Activated B cell treated with CpG ODN at 0.5 μM for 24 hours (primary cell): ENCODE measurements at regions of chr17 and their contacts with region 1.

Region 1: GRCh38 chr17:4939796-4940624 is at the starts of genes RNF167 and SLC25A11:
- DNase-seq: peak; percentile 93
- ATAC-seq: peak; percentile 84
- H3K4me3 Mint-ChIP-seq: peak within 1 kb of the TSS; percentile 97
- H3K27ac Mint-ChIP-seq: peak within 1 kb of the TSS; percentile 98
- H3K4me1 Mint-ChIP-seq: peaks cover 69% of the 10 kb centered on the region
- H3K27me3 Mint-ChIP-seq: no peaks in the 10 kb centered on the region
- CTCF ChIP-seq: no peak
- total RNA-seq, gene RNF167: 93.3 and 108 TPM in 2 replicates
- total RNA-seq, gene SLC25A11: 35.3 and 35.8 TPM in 2 replicates

Region 2: GRCh38 chr17:4903051-4903818 is 36.8 kb before region 1 on chr17 and contains the start of gene CHRNE:
- CTCF ChIA-PET with region 1: interaction called, 3 read pairs
- POLR2A ChIA-PET with region 1: interaction called, 26 read pairs
- intact Hi-C with region 1: no loop called
- DNase-seq: peak; percentile 49
- ATAC-seq: peak; percentile 41
- H3K4me3 Mint-ChIP-seq: peak within 1 kb of the TSS; percentile 49
- H3K27ac Mint-ChIP-seq: peak within 1 kb of the TSS; percentile 73
- H3K4me1 Mint-ChIP-seq: peaks cover 44% of the 10 kb centered on the region
- H3K27me3 Mint-ChIP-seq: peaks cover 2% of the 10 kb centered on the region
- CTCF ChIP-seq: no peak
- total RNA-seq, gene CHRNE: 0.38 and 0.66 TPM in 2 replicates

Region 3: GRCh38 chr17:4997302-4998026 is 57.5 kb after region 1 on chr17 and contains the starts of genes INCA1 and KIF1C:
- CTCF ChIA-PET with region 1: no interaction called
- POLR2A ChIA-PET with region 1: interaction called, 22 read pairs
- intact Hi-C with region 1: loop called (anchors 1 kb)
- DNase-seq: peak; percentile 95
- ATAC-seq: peak; percentile 95
- H3K4me3 Mint-ChIP-seq: peak within 1 kb of the TSS; percentile 85
- H3K27ac Mint-ChIP-seq: peak within 1 kb of the TSS; percentile 90
- H3K4me1 Mint-ChIP-seq: peaks cover 20% of the 10 kb centered on the region
- H3K27me3 Mint-ChIP-seq: no peaks in the 10 kb centered on the region
- CTCF ChIP-seq: no peak
- total RNA-seq, gene INCA1: 0.17 and 0.44 TPM in 2 replicates
- total RNA-seq, gene KIF1C: 62.6 and 63.8 TPM in 2 replicates